WTC11 (cell line): ENCODE measurements at regions of chr10 and their contacts with region 1.

Region 1: DNA sequence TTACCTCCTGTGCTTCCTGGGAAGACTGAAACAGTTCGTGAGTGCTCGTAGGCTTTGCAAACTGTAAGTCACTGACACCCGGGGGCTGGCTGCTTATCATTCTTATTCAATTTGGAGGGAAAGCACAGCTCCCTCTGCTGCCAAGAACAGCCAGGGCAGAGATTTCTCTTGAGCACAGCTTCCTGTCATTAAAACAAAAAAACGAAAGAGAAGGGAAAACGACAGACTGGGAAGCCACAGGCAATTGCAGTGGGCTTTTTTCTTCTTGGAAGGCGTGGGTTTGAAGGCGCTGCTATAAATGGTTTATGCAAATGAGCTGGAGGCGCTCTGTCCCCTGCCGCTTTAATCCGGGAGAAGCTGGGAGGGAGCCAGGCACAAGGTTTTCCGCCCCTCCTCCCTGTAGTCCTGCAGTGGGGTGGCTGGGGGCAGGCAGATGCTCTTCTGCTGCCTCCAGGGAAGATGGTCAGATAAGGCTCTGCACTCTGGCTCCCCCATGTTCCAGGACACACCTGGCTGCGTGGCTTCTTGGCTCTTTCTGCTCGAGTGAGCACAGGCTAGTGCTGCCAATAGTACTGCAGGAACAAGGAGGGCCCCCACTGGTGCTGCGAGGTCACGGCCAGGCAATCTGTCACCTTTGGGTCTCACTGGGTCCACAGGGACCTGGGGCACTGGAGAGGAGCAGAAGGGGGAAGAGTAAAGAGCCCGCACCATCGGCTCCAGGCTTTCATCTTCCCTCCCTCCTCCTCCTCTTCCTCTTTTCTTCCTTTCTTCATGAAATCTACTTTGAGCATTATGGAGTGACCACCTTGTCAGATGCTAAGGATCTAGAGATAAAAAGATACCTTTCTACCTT is 49.5 kb downstream of the NEURL1 start:
- DNase-seq: peak; percentile 45
- ATAC-seq: peak; percentile 89
- H3K4me3 Mint-ChIP-seq: peak overlapping the region; percentile 59
- H3K27ac Mint-ChIP-seq: peak overlapping the region; percentile 7
- H3K4me1 Mint-ChIP-seq: peaks cover 16% of the 10 kb centered on the region
- H3K27me3 Mint-ChIP-seq: peaks cover 3% of the 10 kb centered on the region; the same call in 1 of the 2 replicates
- CTCF ChIP-seq: no peak

Region 2: GRCh38 chr10:103491493-103492381 is 51.3 kb before region 1 on chr10:
- CTCF ChIA-PET with region 1: interaction called, 15 read pairs
- POLR2A ChIA-PET with region 1: no interaction called
- DNase-seq: no peak
- ATAC-seq: no peak
- H3K4me3 Mint-ChIP-seq: 0 out of 2 replicates have a peak overlapping the region, but pooled peaks have one; percentile 11
- H3K27ac Mint-ChIP-seq: no peak overlapping the region
- H3K4me1 Mint-ChIP-seq: peaks cover 9% of the 10 kb centered on the region
- H3K27me3 Mint-ChIP-seq: peaks cover 49% of the 10 kb centered on the region
- CTCF ChIP-seq: no peak

Region 3: GRCh38 chr10:103554488-103555324 is 11.7 kb after region 1 on chr10:
- CTCF ChIA-PET with region 1: interaction called, 15 read pairs
- POLR2A ChIA-PET with region 1: no interaction called
- DNase-seq: peak; percentile 62
- ATAC-seq: peak; percentile 79
- H3K4me3 Mint-ChIP-seq: peak overlapping the region; percentile 71
- H3K27ac Mint-ChIP-seq: no peak overlapping the region
- H3K4me1 Mint-ChIP-seq: 0 out of 2 replicates have a peak, but pooled peaks cover 3% of the 10 kb centered on the region
- H3K27me3 Mint-ChIP-seq: peaks cover 26% of the 10 kb centered on the region
- CTCF ChIP-seq: no peak

Region 4: GRCh38 chr10:103602028-103602851 is 59.2 kb after region 1 on chr10:
- CTCF ChIA-PET with region 1: no interaction called
- POLR2A ChIA-PET with region 1: no interaction called
- DNase-seq: no peak
- ATAC-seq: no peak
- H3K4me3 Mint-ChIP-seq: no peak overlapping the region
- H3K27ac Mint-ChIP-seq: no peak overlapping the region; the same call in 1 of the 2 replicates
- H3K4me1 Mint-ChIP-seq: peaks cover 6% of the 10 kb centered on the region
- H3K27me3 Mint-ChIP-seq: peaks cover 9% of the 10 kb centered on the region
- CTCF ChIP-seq: no peak